Heart right ventricle (tissue), 16 donors: ENCODE measurements at regions of chr11 and their contacts with region 1.

Region 1: GRCh38 chr11:12496171-12497025 is 119.0 kb downstream of the PARVA start:
- DNase-seq: no peak
- ATAC-seq: peak in 6 of 8 donors; percentile 25 to 70 (median 62)
- H3K4me3 ChIP-seq: no peak overlapping the region
- H3K27ac ChIP-seq: no peak overlapping the region
- H3K4me1 ChIP-seq: peaks cover 0 to 7% (median 0%) of the 10 kb centered on the region in 9 donors
- H3K27me3 ChIP-seq: no peaks in the 10 kb centered on the region
- CTCF ChIP-seq: peak in 7 of 9 donors; percentile 13 to 44 (median 29)

Region 2: GRCh38 chr11:12319988-12320387 is 176.4 kb before region 1 on chr11:
- intact Hi-C with region 1: loop called in 1 of 10 experiments (anchors 10 kb)
- DNase-seq: no peak
- ATAC-seq: no peak
- H3K4me3 ChIP-seq: no peak overlapping the region
- H3K27ac ChIP-seq: no peak overlapping the region
- H3K4me1 ChIP-seq: peaks cover 0 to 13% (median 0%) of the 10 kb centered on the region in 9 donors
- H3K27me3 ChIP-seq: no peaks in the 10 kb centered on the region
- CTCF ChIP-seq: no peak

Region 3: DNA sequence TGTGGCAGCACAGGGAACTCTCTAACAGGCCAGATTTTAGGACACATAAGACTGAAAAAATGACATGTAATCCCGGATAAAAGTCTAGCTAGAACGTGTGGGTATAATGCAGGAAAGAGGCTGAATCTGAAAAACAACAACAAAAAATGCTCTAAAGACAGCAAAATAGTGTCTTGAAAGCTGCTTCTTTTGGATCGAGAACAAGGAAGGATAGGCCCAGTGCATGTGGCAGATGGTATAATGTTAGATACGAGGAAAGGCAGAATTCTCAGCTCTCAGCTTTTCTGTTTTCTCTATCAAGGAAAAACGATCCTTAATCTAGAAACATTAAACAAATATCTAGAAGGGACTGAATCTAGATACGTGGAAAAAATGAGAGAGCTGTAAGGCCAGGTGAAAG is 152.9 kb before region 1 on chr11:
- intact Hi-C with region 1: loop called in 2 of 10 experiments (anchors 10 kb)
- DNase-seq: no peak
- ATAC-seq: no peak
- H3K4me3 ChIP-seq: no peak overlapping the region
- H3K27ac ChIP-seq: no peak overlapping the region
- H3K4me1 ChIP-seq: no peaks in the 10 kb centered on the region
- H3K27me3 ChIP-seq: no peaks in the 10 kb centered on the region
- CTCF ChIP-seq: no peak